Activated naive CD8-positive, alpha-beta T cell treated with anti-CD3 and anti-CD28 coated beads, Interleukin-2, amount 10 ng/mL, durations not matched to agents 7 days and 5 days (primary cell): ENCODE measurements at regions of chr14 and their contacts with region 1.

Region 1: GRCh38 chr14:91872517-91873470 is 5.5 kb upstream of the TC2N start:
- DNase-seq: peak; percentile 50
- ATAC-seq: no peak
- H3K4me3 Mint-ChIP-seq: peak overlapping the region; percentile 81
- H3K27ac Mint-ChIP-seq: peak overlapping the region; percentile 94
- H3K4me1 Mint-ChIP-seq: peaks cover 77% of the 10 kb centered on the region
- H3K27me3 Mint-ChIP-seq: peaks cover under 1% of the 10 kb centered on the region

Region 2: DNA sequence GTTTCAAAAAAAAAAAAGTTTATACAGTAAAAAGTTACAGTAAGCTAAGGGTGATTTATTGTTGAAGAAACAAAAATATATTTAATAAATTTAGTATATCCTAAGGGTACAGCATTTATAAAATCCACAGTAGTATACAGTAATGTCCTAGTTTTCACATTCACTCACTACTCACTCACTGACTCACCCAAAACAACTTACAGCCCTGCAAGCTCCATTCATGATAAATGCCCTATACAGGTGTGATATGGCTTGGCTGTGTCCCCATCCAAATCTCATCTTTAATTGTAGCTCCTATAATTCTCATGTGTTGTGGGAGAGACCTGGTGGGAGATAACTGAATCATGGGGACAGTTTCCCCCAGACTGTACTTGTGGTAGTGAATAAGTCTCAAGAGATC is 67.1 kb before region 1 on chr14:
- POLR2A ChIA-PET with region 1: no interaction called
- DNase-seq: no peak
- ATAC-seq: no peak
- H3K4me3 Mint-ChIP-seq: no peak overlapping the region
- H3K27ac Mint-ChIP-seq: no peak overlapping the region
- H3K4me1 Mint-ChIP-seq: no peaks in the 10 kb centered on the region
- H3K27me3 Mint-ChIP-seq: no peaks in the 10 kb centered on the region

Region 3: DNA sequence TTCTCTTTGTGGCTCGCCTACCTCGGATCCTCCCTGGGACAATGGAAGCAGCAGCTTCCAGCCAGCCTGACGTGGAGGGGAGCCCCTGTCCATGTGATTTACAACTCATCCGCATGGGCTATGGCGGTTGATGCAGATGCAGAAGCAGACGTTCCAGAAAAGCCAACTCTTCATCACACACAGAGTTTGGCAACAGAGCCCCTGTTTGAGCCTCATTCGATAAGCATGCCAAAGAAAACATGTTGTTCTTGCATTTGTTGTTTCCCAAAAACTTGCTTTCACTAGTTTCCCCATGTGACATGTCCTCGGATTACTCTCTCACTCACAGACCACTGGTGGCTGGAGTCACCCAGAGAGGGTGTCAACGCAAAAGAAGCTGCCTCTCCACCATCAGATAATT is 11.0 kb after region 1 on chr14:
- POLR2A ChIA-PET with region 1: interaction called, 17 read pairs
- DNase-seq: no peak
- ATAC-seq: no peak
- H3K4me3 Mint-ChIP-seq: no peak overlapping the region
- H3K27ac Mint-ChIP-seq: no peak overlapping the region
- H3K4me1 Mint-ChIP-seq: peaks cover 18% of the 10 kb centered on the region
- H3K27me3 Mint-ChIP-seq: no peaks in the 10 kb centered on the region

Region 4: GRCh38 chr14:91968280-91968679 is 95.5 kb after region 1 on chr14:
- POLR2A ChIA-PET with region 1: no interaction called
- DNase-seq: no peak
- ATAC-seq: peak; percentile 97
- H3K4me3 Mint-ChIP-seq: peak overlapping the region; percentile 14
- H3K27ac Mint-ChIP-seq: peak overlapping the region; percentile 76
- H3K4me1 Mint-ChIP-seq: peaks cover 8% of the 10 kb centered on the region
- H3K27me3 Mint-ChIP-seq: no peaks in the 10 kb centered on the region

Region 5: GRCh38 chr14:91980127-91980741 is 107.4 kb after region 1 on chr14:
- POLR2A ChIA-PET with region 1: no interaction called
- DNase-seq: no peak
- ATAC-seq: no peak
- H3K4me3 Mint-ChIP-seq: no peak overlapping the region
- H3K27ac Mint-ChIP-seq: no peak overlapping the region
- H3K4me1 Mint-ChIP-seq: no peaks in the 10 kb centered on the region
- H3K27me3 Mint-ChIP-seq: no peaks in the 10 kb centered on the region